ENCODE measurements at regions of chr19 and their contacts with region 1.

Region 1: DNA sequence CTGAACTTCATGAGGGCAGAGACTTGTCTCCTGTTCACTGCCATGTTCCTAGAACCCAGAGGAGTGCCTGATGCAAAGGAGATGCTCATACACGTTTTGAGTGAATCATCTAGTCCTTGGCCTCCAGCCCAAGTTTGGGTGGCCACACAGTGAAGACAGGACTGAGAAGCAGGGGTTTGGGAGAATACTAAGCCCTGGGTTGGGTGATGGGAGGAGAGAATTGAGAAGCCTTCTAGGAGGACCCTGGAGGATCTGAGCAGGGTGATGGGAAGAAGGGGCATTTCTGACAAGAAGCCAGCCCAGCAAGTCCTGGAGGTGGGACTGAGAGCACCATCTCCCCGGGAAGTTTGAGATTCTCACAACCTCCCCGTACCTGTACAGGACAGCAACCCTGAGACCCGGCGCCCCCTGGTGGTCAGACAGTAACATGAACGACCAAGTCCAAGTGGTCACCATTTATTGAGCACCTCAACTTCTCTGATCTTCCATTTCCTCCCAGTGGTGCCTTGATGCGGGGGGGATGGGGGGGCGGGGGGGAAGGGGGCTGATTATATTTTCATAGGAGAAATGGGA is 11.0 kb downstream of the CTU1 start:
- DNase-seq: no peak
- H3K4me3 ChIP-seq: no peak overlapping the region
- CTCF ChIP-seq: peak; percentile 79

Region 2: GRCh38 chr19:51079481-51080110 is 17.7 kb before region 1 on chr19:
- CTCF ChIA-PET with region 1: interaction called, 19 read pairs
- POLR2A ChIA-PET with region 1: no interaction called
- DNase-seq: no peak
- H3K4me3 ChIP-seq: no peak overlapping the region
- CTCF ChIP-seq: no peak